Activated naive CD4-positive, alpha-beta T cell treated with anti-CD3 and anti-CD28 coated beads for 36 hours (primary cell): ENCODE measurements at regions of chr1 and their contacts with region 1.

Region 1: DNA sequence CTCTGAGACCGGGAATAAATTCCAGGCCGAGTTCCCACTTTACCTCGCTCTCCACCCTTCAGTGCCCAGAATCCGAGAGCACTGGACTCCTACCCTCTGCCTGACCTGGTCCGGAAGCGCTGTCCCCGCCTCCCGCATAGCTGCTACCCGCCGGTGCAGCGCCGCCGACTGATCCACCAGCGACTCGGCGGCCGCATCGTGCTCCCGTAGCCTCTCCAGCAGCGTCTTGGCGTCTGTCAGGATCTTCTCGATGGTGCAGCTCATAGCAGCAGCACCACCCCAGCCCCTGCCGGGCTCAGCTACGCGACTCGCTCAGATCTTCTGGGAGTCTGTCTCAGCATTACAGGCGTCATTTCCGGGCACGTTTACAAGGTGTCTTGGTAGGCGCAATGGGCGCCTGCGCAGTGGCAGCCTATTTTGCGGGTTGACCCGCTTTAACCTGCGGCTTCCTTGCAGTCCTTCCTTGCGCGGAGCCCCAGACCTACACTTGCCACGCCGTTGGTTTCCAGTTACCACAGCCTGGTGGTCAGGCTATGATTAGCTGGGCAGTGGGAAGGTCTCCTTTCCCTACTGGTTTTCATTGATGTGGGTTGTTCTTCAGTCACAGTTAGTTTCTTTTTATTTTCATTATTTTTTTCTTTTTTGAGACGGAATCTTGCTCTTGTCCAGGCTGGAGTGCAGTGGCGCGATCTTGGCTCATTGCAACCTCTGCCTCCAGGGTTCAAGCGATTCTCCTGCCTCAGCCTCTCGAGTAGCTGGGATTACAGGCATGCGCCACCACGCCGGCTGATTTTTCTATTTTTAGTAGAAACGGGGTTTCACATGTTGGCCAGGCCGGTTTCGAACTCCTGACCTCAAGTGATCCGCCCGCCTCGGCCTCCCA is at the start of gene SIKE1:
- DNase-seq: peak; percentile 97
- H3K4me3 Mint-ChIP-seq: peak within 1 kb of the TSS; percentile 100
- H3K27ac Mint-ChIP-seq: peak within 1 kb of the TSS; percentile 97
- H3K4me1 Mint-ChIP-seq: peaks cover 24% of the 10 kb centered on the region
- H3K27me3 Mint-ChIP-seq: no peaks in the 10 kb centered on the region
- total RNA-seq, gene SIKE1: 60.2 to 60.6 TPM

Region 2: GRCh38 chr1:114716304-114717170 is 64.0 kb before region 1 on chr1 and contains the start of gene NRAS:
- CTCF ChIA-PET with region 1: no interaction called
- intact Hi-C with region 1: loop called (anchors 1 kb)
- DNase-seq: peak; percentile 96
- H3K4me3 Mint-ChIP-seq: peak within 1 kb of the TSS; percentile 98
- H3K27ac Mint-ChIP-seq: peak within 1 kb of the TSS; percentile 99
- H3K4me1 Mint-ChIP-seq: peaks cover 27% of the 10 kb centered on the region
- H3K27me3 Mint-ChIP-seq: no peaks in the 10 kb centered on the region
- total RNA-seq, gene NRAS: 42.1 to 43.9 TPM

Region 3: DNA sequence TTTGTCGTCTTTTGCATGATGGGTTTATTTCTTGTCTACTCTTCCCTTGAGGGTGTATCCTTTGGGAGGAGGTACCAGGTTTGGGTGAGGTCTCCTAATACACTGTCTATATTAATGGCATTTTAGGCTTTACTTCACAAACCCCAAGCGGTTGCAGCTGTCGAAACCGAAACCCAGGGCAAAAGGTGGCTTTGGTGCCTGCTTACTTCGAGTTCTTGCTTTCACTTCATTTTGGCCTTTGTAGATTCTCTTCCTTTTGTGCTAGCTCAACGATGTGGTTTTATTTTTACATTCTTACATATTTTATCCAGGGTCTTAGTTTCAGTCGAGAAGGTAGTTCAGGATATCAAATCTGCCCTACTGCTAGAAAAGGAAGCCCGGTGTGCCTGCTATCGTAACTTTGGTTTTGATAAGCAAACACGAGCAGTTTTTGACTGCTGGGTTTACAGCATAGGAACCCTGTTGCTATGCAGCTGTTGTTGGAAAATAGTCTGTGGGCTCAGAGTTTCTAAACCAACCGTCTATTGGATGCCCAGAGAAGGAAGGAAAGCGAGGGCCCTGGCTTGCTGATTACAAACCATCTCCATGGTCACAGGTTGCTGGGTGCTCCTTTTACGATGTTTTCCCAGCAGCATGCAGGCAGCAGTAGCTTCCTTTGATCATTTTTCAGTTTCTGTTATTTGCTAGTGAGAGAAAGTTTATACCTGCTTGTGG is 318.6 kb after region 1 on chr1:
- CTCF ChIA-PET with region 1: no interaction called
- intact Hi-C with region 1: loop called (anchors 5 kb)
- DNase-seq: peak; percentile 76
- H3K4me3 Mint-ChIP-seq: peak overlapping the region; percentile 78
- H3K27ac Mint-ChIP-seq: peak overlapping the region; percentile 57
- H3K4me1 Mint-ChIP-seq: peaks cover 30% of the 10 kb centered on the region
- H3K27me3 Mint-ChIP-seq: no peaks in the 10 kb centered on the region